ENCODE measurements at regions of chr1 and their contacts with region 1.

Region 1: GRCh38 chr1:207963427-207964194 is 52.7 kb upstream of the CD34 start:
- DNase-seq: peak; percentile 46
- H3K4me3 ChIP-seq: peak overlapping the region; percentile 63
- H3K27ac ChIP-seq: no peak overlapping the region
- H3K27me3 ChIP-seq: no peaks in the 10 kb centered on the region
- CTCF ChIP-seq: peak; percentile 84

Region 2: DNA sequence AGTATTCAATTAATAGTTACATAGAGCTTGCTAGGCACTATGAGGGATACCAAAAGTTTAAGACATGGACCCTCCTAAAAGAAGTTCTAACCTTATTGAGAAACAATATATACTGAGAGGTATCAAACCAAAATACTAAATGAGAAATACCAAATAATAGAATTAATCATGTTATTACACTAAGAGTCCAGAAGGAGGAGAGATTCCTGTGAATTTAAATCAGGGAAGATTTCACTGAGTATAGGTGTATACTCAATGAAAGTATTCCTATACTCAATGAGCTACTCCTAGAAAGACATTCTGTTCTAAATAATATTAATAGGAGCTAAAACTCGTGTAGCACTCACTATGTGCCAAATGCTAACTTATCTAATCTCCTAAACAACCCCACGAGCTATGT is 309.3 kb before region 1 on chr1:
- CTCF ChIA-PET with region 1: interaction called, 12 read pairs
- POLR2A ChIA-PET with region 1: no interaction called
- DNase-seq: no peak
- H3K4me3 ChIP-seq: no peak overlapping the region
- H3K27ac ChIP-seq: no peak overlapping the region
- H3K27me3 ChIP-seq: peaks cover 1% of the 10 kb centered on the region
- CTCF ChIP-seq: peak; percentile 32

Region 3: GRCh38 chr1:207805841-207806421 is 157.7 kb before region 1 on chr1:
- CTCF ChIA-PET with region 1: interaction called, 19 read pairs
- POLR2A ChIA-PET with region 1: no interaction called
- DNase-seq: peak; percentile 85
- H3K4me3 ChIP-seq: no peak overlapping the region
- H3K27ac ChIP-seq: peak overlapping the region; percentile 71
- H3K27me3 ChIP-seq: no peaks in the 10 kb centered on the region
- CTCF ChIP-seq: no peak

Region 4: DNA sequence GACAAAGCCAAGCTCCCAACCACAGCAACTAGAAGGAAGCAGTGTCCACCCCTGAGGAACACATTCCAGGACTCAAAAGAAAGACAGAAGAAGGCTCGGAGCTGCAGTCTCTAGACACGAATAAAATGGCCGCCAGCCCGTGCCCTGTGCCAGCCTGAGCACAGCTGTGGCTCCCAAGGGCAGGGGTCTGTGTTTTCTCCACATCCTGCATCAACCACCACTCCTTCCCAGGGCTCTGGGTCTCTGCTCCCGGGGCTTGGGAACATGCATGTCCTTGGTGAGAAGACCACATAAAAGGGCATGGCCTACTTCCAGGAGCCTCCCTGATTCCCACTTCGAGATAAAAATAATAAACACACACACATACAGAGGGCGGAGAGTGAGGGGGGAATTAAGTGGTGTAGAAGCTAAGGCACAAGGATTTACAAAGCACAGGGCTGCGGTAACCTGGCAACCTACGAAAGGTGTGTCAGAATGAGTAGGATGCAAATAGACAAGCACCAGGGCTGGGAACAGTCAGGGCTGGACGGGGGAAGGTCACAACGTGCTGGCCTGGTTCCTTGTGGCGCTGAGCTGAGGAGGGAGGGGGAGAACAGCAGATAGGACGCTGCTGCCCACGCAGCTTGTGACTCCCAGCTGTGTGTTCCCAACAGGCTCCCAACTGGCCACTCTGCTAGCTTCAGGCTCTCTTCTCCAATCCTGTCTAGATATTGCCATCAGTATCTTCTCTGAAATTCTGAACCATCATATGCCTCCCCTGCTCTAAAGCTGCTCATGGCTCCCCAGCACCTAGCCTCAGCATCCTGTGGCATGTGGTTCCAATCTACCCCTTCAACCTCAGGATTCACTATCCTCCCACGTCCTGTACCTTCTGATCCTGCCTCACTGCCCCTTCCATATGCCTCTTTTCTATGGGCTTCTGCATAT is 125.2 kb before region 1 on chr1:
- CTCF ChIA-PET with region 1: interaction called, 15 read pairs
- POLR2A ChIA-PET with region 1: no interaction called
- DNase-seq: no peak
- H3K4me3 ChIP-seq: no peak overlapping the region
- H3K27ac ChIP-seq: no peak overlapping the region
- H3K27me3 ChIP-seq: no peaks in the 10 kb centered on the region
- CTCF ChIP-seq: no peak

Region 5: DNA sequence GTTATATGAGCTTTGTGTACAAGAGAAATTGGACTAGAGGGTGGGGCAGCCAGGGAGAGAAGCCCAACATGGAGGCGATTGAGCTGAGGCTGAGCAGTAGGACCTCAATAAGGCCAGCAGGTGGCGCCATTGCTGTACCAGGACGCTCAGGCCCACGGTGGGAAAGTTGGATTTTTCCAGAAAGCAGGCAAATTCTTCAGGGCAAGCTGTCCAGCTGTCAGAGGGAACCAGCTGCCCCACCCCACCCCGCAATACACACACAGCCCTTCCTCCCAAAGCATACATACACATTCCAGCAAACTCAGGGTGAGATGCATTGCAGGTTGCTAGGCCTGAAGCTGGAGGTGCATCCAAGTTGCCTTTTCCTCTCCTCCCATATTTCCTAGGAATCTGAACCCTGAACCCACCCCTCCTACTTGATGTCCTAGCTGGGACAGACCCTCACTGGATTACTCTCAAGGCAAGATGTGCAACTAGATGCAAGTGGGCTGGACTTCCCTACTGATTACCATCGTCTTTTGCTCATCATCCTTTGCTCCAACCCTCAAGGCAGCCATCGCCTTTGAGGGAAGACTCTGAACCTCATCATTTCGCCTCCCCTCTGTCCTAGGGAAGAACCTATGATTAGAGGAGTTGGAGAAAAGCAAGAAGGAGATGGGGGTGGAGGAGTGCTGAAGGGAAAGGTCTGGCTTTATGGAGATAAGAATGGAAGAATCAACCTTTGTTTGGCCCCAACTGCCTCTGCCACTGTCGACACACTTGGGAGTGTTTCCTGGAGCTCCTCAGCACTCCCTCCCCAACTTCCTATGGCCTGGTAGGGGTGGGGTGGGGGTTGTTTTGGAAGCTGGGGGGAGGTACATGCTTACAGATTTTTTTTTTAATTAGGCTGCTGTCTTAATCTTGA is 78.2 kb before region 1 on chr1:
- CTCF ChIA-PET with region 1: interaction called, 374 read pairs
- POLR2A ChIA-PET with region 1: interaction called, 11 read pairs
- DNase-seq: peak; percentile 76
- H3K4me3 ChIP-seq: no peak overlapping the region
- H3K27ac ChIP-seq: no peak overlapping the region
- H3K27me3 ChIP-seq: peaks cover 3% of the 10 kb centered on the region
- CTCF ChIP-seq: peak; percentile 98

Region 6: DNA sequence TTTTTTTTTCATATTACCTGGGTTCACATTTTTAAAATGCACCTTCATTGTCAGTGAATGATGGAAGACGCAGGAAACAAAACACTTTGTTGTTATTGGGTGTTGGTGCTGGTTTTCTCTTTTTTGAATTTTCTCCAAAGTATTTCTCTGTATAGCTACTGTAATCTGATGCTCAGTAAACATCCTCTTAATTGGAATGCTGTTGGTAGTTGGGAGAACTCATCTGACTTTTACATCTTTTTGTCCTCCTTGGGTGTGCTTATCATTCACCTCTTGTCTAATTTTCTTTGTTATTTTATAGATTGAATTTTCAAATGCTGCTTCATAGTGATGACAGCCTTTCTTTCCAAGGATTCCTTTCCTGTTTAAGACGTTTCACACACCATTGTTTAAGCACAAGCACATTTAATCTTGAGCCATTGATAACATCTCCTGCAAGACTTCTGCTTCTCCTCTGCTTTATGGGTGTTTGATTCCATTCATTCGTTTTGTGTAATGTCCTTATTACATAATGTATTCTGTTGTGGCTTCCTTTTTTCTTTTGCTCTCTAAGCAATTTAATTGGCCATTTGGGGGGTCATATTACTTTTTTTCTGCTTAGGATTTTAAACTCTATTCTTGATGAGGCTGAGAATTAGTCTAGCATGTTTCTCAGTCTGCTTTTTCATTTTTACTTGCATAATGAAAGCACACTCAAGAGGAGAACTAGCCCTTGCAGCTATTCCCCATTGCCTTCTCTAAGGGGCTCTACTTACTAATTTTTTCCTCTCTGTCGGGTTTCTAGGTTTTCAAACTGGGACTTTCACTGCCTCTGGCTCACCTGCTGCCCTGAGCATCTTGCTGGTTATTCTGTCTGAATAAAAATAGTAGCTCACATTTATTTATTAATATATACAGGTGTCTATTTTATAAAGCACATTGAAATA is 10.7 kb before region 1 on chr1:
- CTCF ChIA-PET with region 1: interaction called, 68 read pairs
- POLR2A ChIA-PET with region 1: no interaction called
- DNase-seq: no peak
- H3K4me3 ChIP-seq: no peak overlapping the region
- H3K27ac ChIP-seq: no peak overlapping the region
- H3K27me3 ChIP-seq: peaks cover 20% of the 10 kb centered on the region
- CTCF ChIP-seq: no peak

Region 7: GRCh38 chr1:208043691-208044181 is 80.1 kb after region 1 on chr1:
- CTCF ChIA-PET with region 1: no interaction called
- POLR2A ChIA-PET with region 1: no interaction called
- DNase-seq: no peak
- H3K4me3 ChIP-seq: no peak overlapping the region
- H3K27ac ChIP-seq: no peak overlapping the region
- H3K27me3 ChIP-seq: no peaks in the 10 kb centered on the region
- CTCF ChIP-seq: no peak

Region 8: DNA sequence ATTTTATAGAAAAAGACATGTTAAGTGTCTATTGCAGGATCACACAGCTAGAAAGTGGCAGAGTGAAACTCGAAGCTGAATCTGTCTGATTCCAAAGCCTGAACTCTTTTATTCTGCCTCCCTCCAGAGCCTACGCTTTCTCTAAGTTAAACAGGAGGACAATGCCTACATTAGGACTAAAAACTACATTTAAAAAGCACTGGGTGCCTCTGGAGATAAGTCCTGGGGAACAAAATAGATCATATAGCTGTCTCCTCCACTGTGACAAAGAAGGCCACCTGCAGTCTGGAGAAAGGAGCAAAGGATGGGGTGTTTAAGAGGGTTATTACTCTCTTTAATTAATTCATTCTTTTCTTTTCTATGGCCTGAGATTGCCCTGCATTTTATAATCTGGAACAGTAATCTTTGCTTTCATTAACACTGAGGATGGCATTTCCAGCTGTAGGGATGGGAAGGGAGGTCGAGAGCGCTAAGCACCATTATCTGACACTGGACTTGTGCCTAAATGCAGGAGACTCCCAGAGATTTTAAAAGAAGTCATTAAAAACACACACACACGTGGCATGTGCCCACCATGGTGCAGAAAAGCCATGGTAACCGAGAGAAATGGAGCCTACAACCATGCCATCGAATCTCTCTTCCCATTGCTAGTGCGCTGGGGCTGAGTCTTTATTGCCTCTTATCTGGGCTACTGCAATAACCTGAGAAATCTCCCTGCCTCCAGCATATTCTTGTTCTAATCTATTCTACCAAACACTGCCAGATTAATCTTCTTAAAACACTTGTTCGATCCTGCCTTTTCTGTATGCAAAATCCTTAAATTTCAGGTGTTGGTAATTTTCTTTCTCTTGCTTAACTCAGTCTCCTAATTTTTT is 188.3 kb after region 1 on chr1:
- CTCF ChIA-PET with region 1: interaction called, 10 read pairs
- POLR2A ChIA-PET with region 1: no interaction called
- DNase-seq: no peak
- H3K4me3 ChIP-seq: no peak overlapping the region
- H3K27ac ChIP-seq: no peak overlapping the region
- H3K27me3 ChIP-seq: no peaks in the 10 kb centered on the region
- CTCF ChIP-seq: no peak